Naive thymus-derived CD4-positive, alpha-beta T cell (primary cell): ENCODE measurements at regions of chr5 and their contacts with region 1.

Region 1: GRCh38 chr5:134041570-134042411 is 37.0 kb upstream of the VDAC1 start:
- DNase-seq: peak in 1 of 9 donors; percentile 11
- ATAC-seq: no peak
- H3K4me3 ChIP-seq: no peak overlapping the region
- H3K4me3 Mint-ChIP-seq: peak overlapping the region; percentile 16 to 81 (median 53)
- H3K27ac ChIP-seq: peak overlapping the region; percentile 24
- H3K27ac Mint-ChIP-seq: peak overlapping the region in 8 of 9 donors; percentile 22 to 91 (median 62)
- H3K4me1 ChIP-seq: peaks cover 11 to 59% of the 10 kb centered on the region in 2 donors
- H3K4me1 Mint-ChIP-seq: peaks cover 26 to 88% (median 68%) of the 10 kb centered on the region in 7 donors
- H3K27me3 ChIP-seq: no peaks in the 10 kb centered on the region
- H3K27me3 Mint-ChIP-seq: peaks cover 0 to 6% (median 0%) of the 10 kb centered on the region in 5 donors

Region 2: GRCh38 chr5:134004592-134005375 is 37.0 kb before region 1 on chr5 and contains the start of gene VDAC1:
- CTCF ChIA-PET with region 1: no interaction called
- POLR2A ChIA-PET with region 1: no interaction called
- intact Hi-C with region 1: loop called (anchors 1 to 2 kb)
- DNase-seq: peak; percentile 74 to 92 (median 89)
- ATAC-seq: peak; percentile 85
- H3K4me3 ChIP-seq: peak within 1 kb of the TSS; percentile 83
- H3K4me3 Mint-ChIP-seq: peak within 1 kb of the TSS; percentile 89 to 97 (median 92)
- H3K27ac ChIP-seq: peak within 1 kb of the TSS; percentile 98
- H3K27ac Mint-ChIP-seq: peak within 1 kb of the TSS; percentile 86 to 97 (median 96)
- H3K4me1 ChIP-seq: peaks cover 17 to 26% of the 10 kb centered on the region in 2 donors
- H3K4me1 Mint-ChIP-seq: peaks cover 25 to 47% (median 43%) of the 10 kb centered on the region in 7 donors
- H3K27me3 ChIP-seq: no peaks in the 10 kb centered on the region
- H3K27me3 Mint-ChIP-seq: no peaks in the 10 kb centered on the region
- total RNA-seq, gene VDAC1: 37.8 to 259 (median 43.7) TPM

Region 3: GRCh38 chr5:134063188-134063820 is 21.5 kb after region 1 on chr5:
- CTCF ChIA-PET with region 1: interaction called, 12 read pairs
- POLR2A ChIA-PET with region 1: interaction called, 15 read pairs
- intact Hi-C with region 1: loop called in 1 of 2 experiments (anchors 2 kb)
- DNase-seq: no peak
- ATAC-seq: no peak
- H3K4me3 ChIP-seq: no peak overlapping the region
- H3K4me3 Mint-ChIP-seq: no peak overlapping the region
- H3K27ac ChIP-seq: no peak overlapping the region
- H3K27ac Mint-ChIP-seq: peak overlapping the region in 6 of 9 donors; percentile 17 to 76 (median 66)
- H3K4me1 ChIP-seq: peaks cover 0 to 7% of the 10 kb centered on the region in 2 donors
- H3K4me1 Mint-ChIP-seq: peaks cover 6 to 47% (median 33%) of the 10 kb centered on the region in 7 donors
- H3K27me3 ChIP-seq: no peaks in the 10 kb centered on the region
- H3K27me3 Mint-ChIP-seq: peaks cover 0 to 10% (median 0%) of the 10 kb centered on the region in 5 donors

Region 4: GRCh38 chr5:134086943-134087305 is 45.1 kb after region 1 on chr5:
- CTCF ChIA-PET with region 1: interaction called, 11 read pairs
- POLR2A ChIA-PET with region 1: interaction called, 31 read pairs
- intact Hi-C with region 1: loop called (anchors 1 kb)
- DNase-seq: peak; percentile 45 to 96 (median 93)
- ATAC-seq: peak; percentile 87
- H3K4me3 ChIP-seq: peak overlapping the region; percentile 32
- H3K4me3 Mint-ChIP-seq: peak overlapping the region; percentile 74 to 87 (median 82)
- H3K27ac ChIP-seq: peak overlapping the region; percentile 66
- H3K27ac Mint-ChIP-seq: peak overlapping the region; percentile 81 to 99 (median 96)
- H3K4me1 ChIP-seq: peaks cover 59 to 87% of the 10 kb centered on the region in 2 donors
- H3K4me1 Mint-ChIP-seq: peaks cover 47 to 98% (median 85%) of the 10 kb centered on the region in 7 donors
- H3K27me3 ChIP-seq: no peaks in the 10 kb centered on the region
- H3K27me3 Mint-ChIP-seq: peaks cover 0 to 24% (median 0%) of the 10 kb centered on the region in 5 donors

Region 5: GRCh38 chr5:134113902-134114875 is 72.4 kb after region 1 on chr5 and contains the start of gene TCF7:
- CTCF ChIA-PET with region 1: interaction called, 63 read pairs
- POLR2A ChIA-PET with region 1: interaction called, 1,333 read pairs
- intact Hi-C with region 1: loop called in 1 of 2 experiments (anchors 1 kb)
- DNase-seq: peak; percentile 69 to 87 (median 83)
- ATAC-seq: peak; percentile 89
- H3K4me3 ChIP-seq: peak within 1 kb of the TSS; percentile 93
- H3K4me3 Mint-ChIP-seq: peak within 1 kb of the TSS; percentile 93 to 100 (median 98)
- H3K27ac ChIP-seq: peak within 1 kb of the TSS; percentile 97
- H3K27ac Mint-ChIP-seq: peak within 1 kb of the TSS; percentile 88 to 99 (median 98)
- H3K4me1 ChIP-seq: peaks cover 34 to 63% of the 10 kb centered on the region in 2 donors
- H3K4me1 Mint-ChIP-seq: peaks cover 27 to 67% (median 31%) of the 10 kb centered on the region in 7 donors
- H3K27me3 ChIP-seq: no peaks in the 10 kb centered on the region
- H3K27me3 Mint-ChIP-seq: peaks cover 0 to 43% (median 0%) of the 10 kb centered on the region in 5 donors
- total RNA-seq, gene TCF7: 203 to 1,066 (median 643) TPM

Region 6: DNA sequence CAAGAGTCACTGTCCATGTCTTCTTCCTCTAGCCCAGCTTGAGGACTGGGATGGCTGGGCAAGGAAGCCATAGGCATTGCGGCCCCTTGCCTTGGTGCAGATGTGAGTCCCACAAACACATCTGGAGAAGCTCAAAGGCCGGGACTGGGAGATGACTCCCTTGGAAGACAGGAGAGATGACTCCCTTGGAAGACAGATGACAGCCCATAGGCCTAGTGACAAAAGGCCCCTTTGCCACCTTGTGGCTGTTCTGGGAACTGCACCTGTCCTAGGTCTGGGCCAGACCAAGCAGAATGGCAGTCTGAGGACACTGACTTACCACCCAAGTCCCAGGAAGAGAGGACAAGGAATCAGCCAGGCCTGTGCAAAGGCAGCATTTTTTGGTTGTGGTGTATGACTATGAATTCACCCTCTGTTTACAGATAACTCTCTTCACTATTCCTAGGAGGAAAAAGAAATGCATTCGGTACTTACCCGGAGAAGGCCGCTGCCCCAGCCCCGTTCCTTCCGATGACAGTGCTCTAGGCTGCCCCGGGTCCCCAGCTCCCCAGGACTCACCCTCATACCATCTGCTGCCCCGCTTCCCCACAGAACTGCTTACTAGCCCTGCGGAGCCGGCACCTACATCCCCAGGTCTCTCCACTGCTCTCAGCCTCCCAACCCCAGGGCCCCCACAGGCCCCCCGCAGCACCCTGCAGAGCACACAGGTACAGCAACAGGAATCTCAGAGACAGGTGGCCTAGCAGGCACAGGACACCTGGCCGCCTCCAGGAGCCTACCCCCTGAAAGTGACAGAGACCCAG is 104.2 kb after region 1 on chr5:
- CTCF ChIA-PET with region 1: interaction called, 365 read pairs
- POLR2A ChIA-PET with region 1: interaction called, 1,333 read pairs
- intact Hi-C with region 1: loop called (anchors 1 kb)
- DNase-seq: peak; percentile 64 to 87 (median 77)
- ATAC-seq: peak; percentile 84
- H3K4me3 ChIP-seq: no peak overlapping the region
- H3K4me3 Mint-ChIP-seq: peak overlapping the region in 4 of 10 donors; percentile 18 to 54 (median 27)
- H3K27ac ChIP-seq: peak overlapping the region; percentile 63
- H3K27ac Mint-ChIP-seq: peak overlapping the region in 8 of 9 donors; percentile 75 to 93 (median 90)
- H3K4me1 ChIP-seq: peaks cover 5 to 29% of the 10 kb centered on the region in 2 donors
- H3K4me1 Mint-ChIP-seq: peaks cover 21 to 67% (median 46%) of the 10 kb centered on the region in 7 donors
- H3K27me3 ChIP-seq: no peaks in the 10 kb centered on the region
- H3K27me3 Mint-ChIP-seq: no peaks in the 10 kb centered on the region

Region 7: GRCh38 chr5:134184155-134185135 is 142.7 kb after region 1 on chr5:
- CTCF ChIA-PET with region 1: interaction called, 7 read pairs
- POLR2A ChIA-PET with region 1: no interaction called
- intact Hi-C with region 1: loop called in 1 of 2 experiments (anchors 1 kb)
- DNase-seq: peak; percentile 52 to 83 (median 65)
- ATAC-seq: peak; percentile 94
- H3K4me3 ChIP-seq: no peak overlapping the region
- H3K4me3 Mint-ChIP-seq: no peak overlapping the region
- H3K27ac ChIP-seq: no peak overlapping the region
- H3K27ac Mint-ChIP-seq: peak overlapping the region in 1 of 9 donors; percentile 16
- H3K4me1 ChIP-seq: no peaks in the 10 kb centered on the region
- H3K4me1 Mint-ChIP-seq: peaks cover 0 to 5% (median 0%) of the 10 kb centered on the region in 7 donors
- H3K27me3 ChIP-seq: no peaks in the 10 kb centered on the region
- H3K27me3 Mint-ChIP-seq: peaks cover 0 to 4% (median 0%) of the 10 kb centered on the region in 5 donors